ENCODE measurements at regions of chr6 and their contacts with region 1.

Region 1: GRCh38 chr6:87139236-87139635 is 16.1 kb upstream of the ZNF292 start:
- DNase-seq: peak in 6 of 9 experiments; percentile 30 to 81 (median 48)
- ATAC-seq: peak; percentile 86
- H3K4me3 ChIP-seq: no peak overlapping the region
- H3K4me3 Mint-ChIP-seq: no peak overlapping the region
- H3K27ac ChIP-seq: no peak overlapping the region
- H3K27ac Mint-ChIP-seq: no peak overlapping the region
- H3K4me1 ChIP-seq: no peaks in the 10 kb centered on the region
- H3K4me1 Mint-ChIP-seq: peaks cover 2% of the 10 kb centered on the region
- H3K27me3 ChIP-seq: no peaks in the 10 kb centered on the region
- H3K27me3 Mint-ChIP-seq: peaks cover 4% of the 10 kb centered on the region
- CTCF ChIP-seq: peak; percentile 86

Region 2: DNA sequence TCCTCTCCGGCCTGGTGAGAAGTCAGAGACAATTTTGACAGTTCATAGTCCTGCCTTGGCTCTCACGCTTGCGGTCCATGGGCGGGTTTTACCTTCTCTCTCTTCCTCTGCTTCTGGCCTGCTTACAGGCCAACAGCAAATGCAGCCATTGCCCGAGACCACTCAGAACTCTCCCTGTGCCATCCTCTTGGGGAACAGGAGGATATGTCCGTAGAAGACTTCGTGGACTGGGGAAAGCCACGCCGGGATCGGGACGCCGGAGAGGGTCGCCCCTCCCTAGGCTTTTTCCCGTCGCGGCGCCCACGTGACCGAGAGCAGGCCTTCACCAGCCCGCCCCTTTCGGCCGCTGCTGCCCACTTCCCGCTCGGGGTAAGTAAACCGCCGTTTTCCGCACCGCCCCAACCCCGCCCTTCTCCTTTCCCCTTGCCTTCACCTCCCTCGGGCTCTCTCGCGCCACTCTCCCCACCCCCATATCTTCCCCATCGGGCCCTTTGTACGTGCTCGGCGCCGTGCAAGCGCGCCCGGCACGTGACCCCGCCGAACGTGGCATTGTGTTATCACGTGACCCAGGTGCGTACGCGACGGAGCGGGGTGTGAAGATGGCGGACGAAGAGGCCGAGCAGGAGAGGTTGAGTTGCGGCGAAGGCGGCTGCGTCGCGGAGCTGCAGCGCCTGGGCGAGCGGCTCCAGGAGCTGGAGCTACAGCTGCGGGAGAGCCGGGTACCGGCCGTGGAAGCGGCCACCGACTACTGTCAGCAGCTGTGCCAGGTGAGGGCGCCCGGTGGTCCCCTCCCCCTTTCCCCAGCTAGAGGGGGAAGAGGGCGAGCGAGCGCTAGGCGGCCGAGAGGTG is 16.0 kb after region 1 on chr6 and contains the start of gene ZNF292:
- CTCF ChIA-PET with region 1: interaction called, 16 read pairs
- POLR2A ChIA-PET with region 1: interaction called, 4 read pairs
- intact Hi-C with region 1: loop called in 1 of 2 experiments (anchors 2 kb)
- DNase-seq: peak; percentile 85 to 98 (median 95)
- ATAC-seq: peak; percentile 67
- H3K4me3 ChIP-seq: peak within 1 kb of the TSS; percentile 73 to 80
- H3K4me3 Mint-ChIP-seq: peak within 1 kb of the TSS; percentile 96
- H3K27ac ChIP-seq: peak within 1 kb of the TSS; percentile 85 to 95
- H3K27ac Mint-ChIP-seq: peak within 1 kb of the TSS; percentile 98
- H3K4me1 ChIP-seq: peaks cover 54% of the 10 kb centered on the region
- H3K4me1 Mint-ChIP-seq: peaks cover 58% of the 10 kb centered on the region
- H3K27me3 ChIP-seq: no peaks in the 10 kb centered on the region
- H3K27me3 Mint-ChIP-seq: no peaks in the 10 kb centered on the region
- CTCF ChIP-seq: no peak
- total RNA-seq, gene ZNF292: 82.6 to 87.6 TPM

Region 3: DNA sequence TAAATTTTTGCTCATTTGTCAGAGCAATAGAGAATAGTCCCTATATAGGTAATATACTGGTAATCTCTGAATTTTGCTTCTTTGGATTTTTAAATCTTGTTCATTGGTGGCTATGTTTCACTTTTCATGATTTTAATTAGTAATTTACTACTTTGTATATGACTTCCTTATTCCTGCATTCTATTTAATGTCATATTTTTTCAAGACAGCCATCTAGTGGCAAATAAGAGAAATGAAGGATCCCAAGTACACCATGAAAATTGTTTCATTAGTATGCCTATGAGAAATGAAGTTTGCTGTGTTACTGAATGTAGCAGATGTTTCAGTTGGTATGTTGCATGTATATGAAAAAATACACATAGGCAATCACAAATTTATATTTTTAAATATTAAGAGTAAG is 98.6 kb after region 1 on chr6:
- CTCF ChIA-PET with region 1: interaction called, 20 read pairs
- POLR2A ChIA-PET with region 1: no interaction called
- intact Hi-C with region 1: loop called (anchors 1 kb)
- DNase-seq: peak in 2 of 9 experiments; percentile 25 to 52
- ATAC-seq: peak; percentile 66
- H3K4me3 ChIP-seq: no peak overlapping the region
- H3K4me3 Mint-ChIP-seq: no peak overlapping the region
- H3K27ac ChIP-seq: no peak overlapping the region
- H3K27ac Mint-ChIP-seq: no peak overlapping the region
- H3K4me1 ChIP-seq: no peaks in the 10 kb centered on the region
- H3K4me1 Mint-ChIP-seq: peaks cover 7% of the 10 kb centered on the region
- H3K27me3 ChIP-seq: no peaks in the 10 kb centered on the region
- H3K27me3 Mint-ChIP-seq: no peaks in the 10 kb centered on the region
- CTCF ChIP-seq: peak; percentile 75

Region 4: GRCh38 chr6:87393022-87393622 is 253.9 kb after region 1 on chr6:
- CTCF ChIA-PET with region 1: interaction called, 8 read pairs
- POLR2A ChIA-PET with region 1: no interaction called
- intact Hi-C with region 1: loop called (anchors 5 kb)
- DNase-seq: peak in 7 of 9 experiments; percentile 8 to 79 (median 29)
- ATAC-seq: peak; percentile 99
- H3K4me3 ChIP-seq: no peak overlapping the region
- H3K4me3 Mint-ChIP-seq: no peak overlapping the region
- H3K27ac ChIP-seq: no peak overlapping the region
- H3K27ac Mint-ChIP-seq: no peak overlapping the region
- H3K4me1 ChIP-seq: no peaks in the 10 kb centered on the region
- H3K4me1 Mint-ChIP-seq: peaks cover 3% of the 10 kb centered on the region
- H3K27me3 ChIP-seq: no peaks in the 10 kb centered on the region
- H3K27me3 Mint-ChIP-seq: no peaks in the 10 kb centered on the region
- CTCF ChIP-seq: peak; percentile 72

Region 5: GRCh38 chr6:87522686-87523085 is 383.4 kb after region 1 on chr6:
- CTCF ChIA-PET with region 1: no interaction called
- POLR2A ChIA-PET with region 1: no interaction called
- intact Hi-C with region 1: loop called in 1 of 2 experiments (anchors 10 kb)
- DNase-seq: no peak
- ATAC-seq: no peak
- H3K4me3 ChIP-seq: no peak overlapping the region
- H3K4me3 Mint-ChIP-seq: no peak overlapping the region
- H3K27ac ChIP-seq: no peak overlapping the region
- H3K27ac Mint-ChIP-seq: no peak overlapping the region
- H3K4me1 ChIP-seq: no peaks in the 10 kb centered on the region
- H3K4me1 Mint-ChIP-seq: peaks cover 2% of the 10 kb centered on the region
- H3K27me3 ChIP-seq: no peaks in the 10 kb centered on the region
- H3K27me3 Mint-ChIP-seq: no peaks in the 10 kb centered on the region
- CTCF ChIP-seq: no peak

Measured in CD8-positive, alpha-beta T cell (primary cell).